MCF 10A (cell line): ENCODE measurements at regions of chr1 and their contacts with region 1.

Region 1: GRCh38 chr1:182457844-182458243 is 7.9 kb downstream of the RGSL1 start:
- DNase-seq: no peak
- H3K4me3 Mint-ChIP-seq: no peak overlapping the region
- H3K27ac Mint-ChIP-seq: no peak overlapping the region
- H3K4me1 Mint-ChIP-seq: peaks cover 7% of the 10 kb centered on the region
- H3K27me3 Mint-ChIP-seq: peaks cover 25% of the 10 kb centered on the region
- CTCF ChIP-seq: no peak

Region 2: DNA sequence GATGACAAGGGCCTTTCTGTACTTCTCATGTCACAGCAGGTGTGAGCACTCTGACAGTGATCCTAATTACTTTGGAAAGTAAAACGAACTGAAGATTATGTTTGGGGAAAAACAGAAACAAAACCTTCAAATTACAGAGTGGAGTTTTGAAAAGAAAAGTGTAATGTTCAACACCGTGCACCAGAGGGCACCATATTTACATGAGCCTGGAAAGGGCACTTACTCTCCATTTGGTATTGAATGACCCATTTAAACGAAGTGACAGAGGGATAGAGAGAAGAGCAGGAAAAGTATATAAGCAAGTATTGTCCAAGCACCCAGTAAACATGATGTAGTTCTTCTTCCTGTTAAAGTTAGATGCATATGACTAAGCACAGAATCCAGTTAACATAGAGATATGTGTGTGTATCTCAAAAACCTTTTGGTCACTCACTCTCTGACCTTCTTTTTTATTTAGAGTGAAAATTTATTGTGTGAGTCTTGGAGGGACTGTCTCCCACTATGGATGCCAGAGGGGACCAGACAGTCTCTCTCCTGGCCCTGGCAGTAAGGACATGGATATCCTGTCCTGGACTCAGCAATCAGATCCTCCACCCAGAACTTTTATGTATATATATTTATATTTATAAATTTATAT is 11.7 kb before region 1 on chr1:
- CTCF ChIA-PET with region 1: interaction called, 10 read pairs
- POLR2A ChIA-PET with region 1: interaction called, 4 read pairs
- intact Hi-C with region 1: no loop called
- DNase-seq: peak; percentile 81
- H3K4me3 Mint-ChIP-seq: no peak overlapping the region
- H3K27ac Mint-ChIP-seq: no peak overlapping the region
- H3K4me1 Mint-ChIP-seq: peaks cover 6% of the 10 kb centered on the region
- H3K27me3 Mint-ChIP-seq: no peaks in the 10 kb centered on the region
- CTCF ChIP-seq: peak; percentile 89

Region 3: DNA sequence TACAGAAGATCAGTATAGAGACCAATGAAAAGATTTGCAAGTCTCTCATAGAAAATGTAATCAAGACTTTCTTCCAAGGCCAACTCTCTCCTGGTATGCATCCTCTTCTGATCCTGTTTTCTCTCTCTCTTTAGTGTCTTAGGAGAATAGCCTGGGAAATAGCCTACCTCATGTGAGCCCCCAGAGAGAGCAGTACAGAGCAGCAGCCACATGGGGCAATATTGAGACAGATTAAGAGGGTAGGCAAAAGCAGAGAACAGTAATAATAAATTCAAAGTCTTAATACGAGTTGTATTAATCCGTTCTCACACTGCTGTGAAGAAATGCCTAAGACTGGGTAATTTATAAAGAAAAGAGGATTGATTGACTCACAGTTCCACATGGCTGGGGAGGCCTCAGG is 69.8 kb after region 1 on chr1:
- CTCF ChIA-PET with region 1: no interaction called
- POLR2A ChIA-PET with region 1: no interaction called
- intact Hi-C with region 1: no loop called
- DNase-seq: no peak
- H3K4me3 Mint-ChIP-seq: no peak overlapping the region
- H3K27ac Mint-ChIP-seq: no peak overlapping the region
- H3K4me1 Mint-ChIP-seq: no peaks in the 10 kb centered on the region
- H3K27me3 Mint-ChIP-seq: peaks cover 19% of the 10 kb centered on the region
- CTCF ChIP-seq: no peak

Region 4: DNA sequence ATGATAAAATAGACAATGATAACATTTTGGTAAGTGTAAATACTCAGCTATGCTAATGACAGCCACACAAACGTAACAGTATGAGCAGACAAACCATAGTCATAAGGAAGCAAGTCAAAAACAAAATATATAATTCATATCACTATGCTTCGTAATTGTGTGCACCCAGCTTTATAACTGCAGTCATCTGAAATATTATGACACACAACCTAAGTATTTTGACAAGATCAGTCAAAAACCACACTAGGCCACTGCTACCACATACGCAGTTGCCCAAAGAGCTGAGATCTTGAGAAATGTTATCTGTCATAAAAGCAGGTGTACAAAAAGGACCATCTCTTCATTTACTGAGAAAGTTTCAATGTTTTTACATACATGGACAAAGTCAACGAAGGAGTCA is 105.3 kb after region 1 on chr1:
- CTCF ChIA-PET with region 1: no interaction called
- POLR2A ChIA-PET with region 1: no interaction called
- intact Hi-C with region 1: no loop called
- DNase-seq: peak; percentile 11
- H3K4me3 Mint-ChIP-seq: no peak overlapping the region
- H3K27ac Mint-ChIP-seq: no peak overlapping the region
- H3K4me1 Mint-ChIP-seq: no peaks in the 10 kb centered on the region
- H3K27me3 Mint-ChIP-seq: no peaks in the 10 kb centered on the region
- CTCF ChIP-seq: no peak